ENCODE measurements at regions of chr20 and their contacts with region 1.

Region 1: GRCh38 chr20:24934101-24934661 is 14.9 kb upstream of the CST7 start:
- DNase-seq: peak in 1 of 9 experiments; percentile 45
- ATAC-seq: no peak
- H3K4me3 ChIP-seq: no peak overlapping the region
- H3K4me3 Mint-ChIP-seq: no peak overlapping the region
- H3K27ac ChIP-seq: no peak overlapping the region
- H3K27ac Mint-ChIP-seq: no peak overlapping the region
- H3K4me1 ChIP-seq: peaks cover 17% of the 10 kb centered on the region
- H3K4me1 Mint-ChIP-seq: peaks cover 31% of the 10 kb centered on the region
- H3K27me3 ChIP-seq: no peaks in the 10 kb centered on the region
- H3K27me3 Mint-ChIP-seq: no peaks in the 10 kb centered on the region
- CTCF ChIP-seq: no peak

Region 2: DNA sequence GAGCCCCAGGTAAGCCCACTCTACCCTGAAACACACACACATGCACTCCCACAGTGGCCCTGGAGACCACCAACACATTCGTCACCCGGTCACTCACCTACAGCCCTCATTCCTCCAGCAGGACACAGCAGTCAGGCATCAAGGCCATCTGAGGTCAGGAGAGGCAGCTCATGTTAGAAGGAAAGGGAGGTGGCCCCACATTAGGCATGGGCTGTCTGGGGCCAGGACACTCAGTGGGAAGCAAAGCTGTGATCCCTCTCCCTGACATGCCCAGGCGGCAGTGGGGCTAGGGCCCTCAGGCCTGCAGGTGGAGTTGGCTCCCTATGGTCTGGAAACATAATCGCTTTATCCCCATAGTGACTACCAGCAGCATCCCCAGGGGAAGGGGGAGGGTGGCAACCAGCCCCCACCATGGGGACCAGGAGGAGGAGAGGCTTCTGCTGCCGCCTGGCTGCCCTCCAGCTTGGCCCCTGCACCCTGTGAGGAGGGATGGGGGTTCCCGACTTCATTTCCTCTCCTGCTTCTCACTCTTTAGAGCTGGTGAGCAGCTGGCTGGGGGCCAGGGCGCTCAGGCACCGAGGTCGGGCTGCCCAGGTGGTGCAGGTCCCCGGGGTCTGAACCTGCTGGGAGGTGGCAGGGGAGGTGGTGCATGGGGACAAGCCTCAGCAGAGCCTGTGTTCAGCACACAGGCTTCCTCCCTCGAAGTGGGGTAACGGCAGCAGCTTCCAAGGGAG is 61.7 kb before region 1 on chr20:
- CTCF ChIA-PET with region 1: no interaction called
- POLR2A ChIA-PET with region 1: no interaction called
- intact Hi-C with region 1: loop called in 1 of 2 experiments (anchors 10 kb)
- DNase-seq: no peak
- ATAC-seq: no peak
- H3K4me3 ChIP-seq: no peak overlapping the region
- H3K4me3 Mint-ChIP-seq: no peak overlapping the region
- H3K27ac ChIP-seq: no peak overlapping the region
- H3K27ac Mint-ChIP-seq: no peak overlapping the region
- H3K4me1 ChIP-seq: no peaks in the 10 kb centered on the region
- H3K4me1 Mint-ChIP-seq: no peaks in the 10 kb centered on the region
- H3K27me3 ChIP-seq: no peaks in the 10 kb centered on the region
- H3K27me3 Mint-ChIP-seq: peaks cover 6% of the 10 kb centered on the region
- CTCF ChIP-seq: no peak

Region 3: GRCh38 chr20:24948939-24949679 is 14.9 kb after region 1 on chr20 and contains the start of gene CST7:
- CTCF ChIA-PET with region 1: interaction called, 13 read pairs
- POLR2A ChIA-PET with region 1: interaction called, 5 read pairs
- intact Hi-C with region 1: loop called in 1 of 2 experiments (anchors 2 kb)
- DNase-seq: peak; percentile 76 to 96 (median 87)
- ATAC-seq: peak; percentile 90
- H3K4me3 ChIP-seq: peak within 1 kb of the TSS; percentile 55 to 90
- H3K4me3 Mint-ChIP-seq: peak within 1 kb of the TSS; percentile 86
- H3K27ac ChIP-seq: peak within 1 kb of the TSS; percentile 73 to 95
- H3K27ac Mint-ChIP-seq: peak within 1 kb of the TSS; percentile 93
- H3K4me1 ChIP-seq: peaks cover 23% of the 10 kb centered on the region
- H3K4me1 Mint-ChIP-seq: peaks cover 63% of the 10 kb centered on the region
- H3K27me3 ChIP-seq: no peaks in the 10 kb centered on the region
- H3K27me3 Mint-ChIP-seq: no peaks in the 10 kb centered on the region
- CTCF ChIP-seq: no peak
- total RNA-seq, gene CST7: 53.3 to 54.6 TPM

Region 4: DNA sequence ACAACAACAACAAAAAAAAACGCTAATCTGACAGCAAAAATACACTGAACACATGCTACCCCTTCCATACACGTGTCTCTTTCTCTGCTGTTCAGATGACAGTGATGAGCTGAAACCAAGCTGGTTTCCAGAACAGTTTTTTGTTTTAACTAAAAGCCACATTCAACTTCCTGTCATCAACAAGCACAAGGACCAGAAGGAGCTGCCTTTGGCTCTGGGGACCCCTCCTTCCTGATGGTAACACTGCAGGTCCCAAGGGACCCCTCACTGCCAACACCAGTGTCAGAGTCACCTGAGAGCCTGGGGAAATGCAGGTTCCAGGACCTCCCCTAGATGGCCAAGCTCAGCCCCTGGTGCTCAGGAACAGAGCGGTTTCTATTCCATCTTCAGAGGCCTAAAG is 20.9 kb after region 1 on chr20:
- CTCF ChIA-PET with region 1: interaction called, 13 read pairs
- POLR2A ChIA-PET with region 1: no interaction called
- intact Hi-C with region 1: no loop called
- DNase-seq: peak in 2 of 9 experiments; percentile 54 to 76
- ATAC-seq: peak; percentile 42
- H3K4me3 ChIP-seq: no peak overlapping the region
- H3K4me3 Mint-ChIP-seq: peak overlapping the region; percentile 31
- H3K27ac ChIP-seq: peak overlapping the region in 1 of 2 experiments; percentile 95
- H3K27ac Mint-ChIP-seq: peak overlapping the region; percentile 80
- H3K4me1 ChIP-seq: peaks cover 37% of the 10 kb centered on the region
- H3K4me1 Mint-ChIP-seq: peaks cover 53% of the 10 kb centered on the region
- H3K27me3 ChIP-seq: no peaks in the 10 kb centered on the region
- H3K27me3 Mint-ChIP-seq: no peaks in the 10 kb centered on the region
- CTCF ChIP-seq: no peak